Activated T-helper 2 cell treated with anti-CD3 and anti-CD28 coated beads, Interferon-gamma antibody, Interleukin-2, Interleukin-4, amounts not matched to agents 10 μg/mL and 5 μg/mL and 100 μg/mL, durations not matched to agents 14 hours and 24 hours and 36 hours (primary cell): ENCODE measurements at regions of chr1 and their contacts with region 1.

Region 1: DNA sequence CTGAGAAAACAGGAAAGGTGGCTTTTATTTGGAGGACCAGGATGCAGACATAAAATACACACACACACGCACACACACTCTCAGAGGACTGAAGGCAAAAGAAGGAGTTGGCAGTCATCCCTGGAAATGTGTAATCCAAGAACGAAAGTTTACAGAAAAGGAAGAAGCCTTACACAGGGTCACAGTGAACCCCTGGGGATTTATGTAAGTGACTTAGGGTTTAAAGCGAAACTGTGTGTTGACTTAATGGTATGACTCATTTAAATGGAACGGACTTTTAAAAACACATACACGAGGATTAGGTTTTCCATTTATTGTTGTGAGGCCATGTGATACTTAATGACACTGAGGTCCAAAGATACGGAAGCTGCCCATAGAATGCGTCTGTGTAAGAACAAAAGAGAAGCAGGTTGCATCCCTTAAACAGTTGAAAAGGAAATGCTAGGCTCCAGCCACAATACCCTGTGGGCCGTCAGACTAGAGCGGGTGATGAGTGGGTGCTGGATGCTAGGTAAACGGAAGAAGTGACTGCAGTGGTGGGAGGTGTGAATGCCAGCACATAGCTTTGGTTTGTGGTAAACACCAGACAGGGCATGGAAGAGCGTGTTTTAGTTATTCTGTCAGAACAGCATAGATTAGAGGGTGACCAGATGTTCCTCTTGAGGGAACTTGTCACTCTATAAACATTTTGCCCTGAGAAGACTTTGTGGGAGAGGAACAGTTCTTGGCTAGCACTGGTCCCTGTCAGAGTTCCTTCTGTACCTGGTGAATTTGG is 21.6 kb upstream of the BCL10 start:
- DNase-seq: peak; percentile 28
- H3K4me3 Mint-ChIP-seq: peak overlapping the region; percentile 49
- H3K27ac Mint-ChIP-seq: peak overlapping the region; percentile 81
- H3K4me1 Mint-ChIP-seq: peaks cover 24% of the 10 kb centered on the region
- H3K27me3 Mint-ChIP-seq: peaks cover 64% of the 10 kb centered on the region

Region 2: GRCh38 chr1:85321237-85321964 is 23.4 kb after region 1 on chr1:
- intact Hi-C with region 1: loop called (anchors 1 kb)
- DNase-seq: peak; percentile 10
- H3K4me3 Mint-ChIP-seq: no peak overlapping the region
- H3K27ac Mint-ChIP-seq: no peak overlapping the region
- H3K4me1 Mint-ChIP-seq: peaks cover 18% of the 10 kb centered on the region
- H3K27me3 Mint-ChIP-seq: peaks cover 69% of the 10 kb centered on the region

Region 3: GRCh38 chr1:85707990-85708828 is 410.2 kb after region 1 on chr1 and contains the start of gene ZNHIT6:
- intact Hi-C with region 1: loop called (anchors 5 kb)
- DNase-seq: peak; percentile 84
- H3K4me3 Mint-ChIP-seq: no peak within 1 kb of the TSS
- H3K27ac Mint-ChIP-seq: no peak within 1 kb of the TSS
- H3K4me1 Mint-ChIP-seq: peaks cover 20% of the 10 kb centered on the region
- H3K27me3 Mint-ChIP-seq: peaks cover 1% of the 10 kb centered on the region
- total RNA-seq, gene ZNHIT6: 19.9 and 21.8 TPM in 2 replicates